ENCODE measurements at regions of chr6 and their contacts with region 1.

Region 1: GRCh38 chr6:31795616-31796298 is at the start of gene VARS1:
- DNase-seq: peak; percentile 86
- H3K4me3 Mint-ChIP-seq: peak within 1 kb of the TSS; percentile 89
- H3K27ac Mint-ChIP-seq: peak within 1 kb of the TSS; percentile 97
- H3K4me1 Mint-ChIP-seq: peaks cover 58% of the 10 kb centered on the region
- H3K27me3 Mint-ChIP-seq: no peaks in the 10 kb centered on the region
- total RNA-seq, gene VARS1: 84.1 to 88.4 TPM

Region 2: DNA sequence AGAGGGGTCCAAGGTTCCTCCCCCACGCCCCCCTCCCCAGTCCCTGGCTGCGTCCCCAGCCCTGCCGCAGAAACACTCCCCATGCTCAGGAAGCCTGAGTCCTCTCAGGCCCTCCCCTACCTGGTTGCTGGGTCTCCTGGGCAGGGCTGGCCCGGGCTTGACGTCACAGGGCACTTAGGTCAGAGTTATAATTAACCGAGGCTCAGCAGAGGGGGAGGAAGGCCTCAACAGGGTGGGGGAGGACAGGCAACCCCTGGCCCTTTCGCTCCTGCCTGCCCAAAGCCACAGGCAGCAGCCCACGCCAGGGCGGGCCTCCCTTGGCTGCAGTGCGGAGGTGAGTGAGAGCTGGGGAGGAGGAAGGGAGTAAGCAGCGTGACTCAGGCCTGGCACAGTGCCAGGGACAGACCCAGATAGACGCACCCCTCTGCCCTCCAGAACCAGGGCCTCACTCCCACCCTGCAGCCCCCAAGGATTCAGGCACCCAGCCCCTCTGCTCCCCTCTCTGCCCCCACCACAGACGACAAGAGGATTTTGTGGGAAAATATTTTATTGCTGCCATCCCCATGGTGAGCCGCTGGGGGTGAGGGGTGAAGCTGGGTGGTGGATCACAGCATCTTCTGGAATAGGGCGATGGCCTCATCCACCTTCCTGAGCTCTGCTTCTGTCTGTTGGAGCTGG is 18.6 kb before region 1 on chr6 and contains the start of gene VWA7:
- CTCF ChIA-PET with region 1: interaction called, 5 read pairs
- POLR2A ChIA-PET with region 1: interaction called, 14 read pairs
- DNase-seq: peak; percentile 83
- H3K4me3 Mint-ChIP-seq: peak within 1 kb of the TSS; percentile 63
- H3K27ac Mint-ChIP-seq: peak within 1 kb of the TSS; percentile 84
- H3K4me1 Mint-ChIP-seq: peaks cover 43% of the 10 kb centered on the region
- H3K27me3 Mint-ChIP-seq: no peaks in the 10 kb centered on the region
- total RNA-seq, gene VWA7: 11.0 to 12.2 TPM

Region 3: DNA sequence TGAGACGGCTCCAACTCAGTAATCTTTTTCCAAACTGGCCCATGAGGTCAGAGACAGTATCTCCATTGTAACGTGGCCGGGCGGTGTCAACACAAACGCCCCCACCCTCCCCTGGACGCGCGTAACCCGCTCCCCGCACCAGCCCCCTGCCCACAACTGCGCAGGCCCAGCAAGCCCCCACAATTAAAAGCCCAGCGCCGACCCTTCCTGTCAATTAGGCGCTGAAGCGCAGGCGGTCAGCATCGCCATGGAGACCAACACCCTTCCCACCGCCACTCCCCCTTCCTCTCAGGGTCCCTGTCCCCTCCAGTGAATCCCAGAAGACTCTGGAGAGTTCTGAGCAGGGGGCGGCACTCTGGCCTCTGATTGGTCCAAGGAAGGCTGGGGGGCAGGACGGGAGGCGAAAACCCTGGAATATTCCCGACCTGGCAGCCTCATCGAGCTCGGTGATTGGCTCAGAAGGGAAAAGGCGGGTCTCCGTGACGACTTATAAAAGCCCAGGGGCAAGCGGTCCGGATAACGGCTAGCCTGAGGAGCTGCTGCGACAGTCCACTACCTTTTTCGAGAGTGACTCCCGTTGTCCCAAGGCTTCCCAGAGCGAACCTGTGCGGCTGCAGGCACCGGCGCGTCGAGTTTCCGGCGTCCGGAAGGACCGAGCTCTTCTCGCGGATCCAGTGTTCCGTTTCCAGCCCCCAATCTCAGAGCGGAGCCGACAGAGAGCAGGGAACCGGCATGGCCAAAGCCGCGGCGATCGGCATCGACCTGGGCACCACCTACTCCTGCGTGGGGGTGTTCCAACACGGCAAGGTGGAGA is 19.5 kb after region 1 on chr6 and contains the starts of genes HSPA1A and HSPA1L:
- CTCF ChIA-PET with region 1: interaction called, 8 read pairs
- POLR2A ChIA-PET with region 1: interaction called, 35 read pairs
- DNase-seq: peak; percentile 82
- H3K4me3 Mint-ChIP-seq: peak within 1 kb of the TSS; percentile 83
- H3K27ac Mint-ChIP-seq: peak within 1 kb of the TSS; percentile 96
- H3K4me1 Mint-ChIP-seq: peaks cover 55% of the 10 kb centered on the region
- H3K27me3 Mint-ChIP-seq: no peaks in the 10 kb centered on the region
- total RNA-seq, gene HSPA1A: 147 to 151 TPM
- total RNA-seq, gene HSPA1L: 2.8 to 3.0 TPM

Region 4: DNA sequence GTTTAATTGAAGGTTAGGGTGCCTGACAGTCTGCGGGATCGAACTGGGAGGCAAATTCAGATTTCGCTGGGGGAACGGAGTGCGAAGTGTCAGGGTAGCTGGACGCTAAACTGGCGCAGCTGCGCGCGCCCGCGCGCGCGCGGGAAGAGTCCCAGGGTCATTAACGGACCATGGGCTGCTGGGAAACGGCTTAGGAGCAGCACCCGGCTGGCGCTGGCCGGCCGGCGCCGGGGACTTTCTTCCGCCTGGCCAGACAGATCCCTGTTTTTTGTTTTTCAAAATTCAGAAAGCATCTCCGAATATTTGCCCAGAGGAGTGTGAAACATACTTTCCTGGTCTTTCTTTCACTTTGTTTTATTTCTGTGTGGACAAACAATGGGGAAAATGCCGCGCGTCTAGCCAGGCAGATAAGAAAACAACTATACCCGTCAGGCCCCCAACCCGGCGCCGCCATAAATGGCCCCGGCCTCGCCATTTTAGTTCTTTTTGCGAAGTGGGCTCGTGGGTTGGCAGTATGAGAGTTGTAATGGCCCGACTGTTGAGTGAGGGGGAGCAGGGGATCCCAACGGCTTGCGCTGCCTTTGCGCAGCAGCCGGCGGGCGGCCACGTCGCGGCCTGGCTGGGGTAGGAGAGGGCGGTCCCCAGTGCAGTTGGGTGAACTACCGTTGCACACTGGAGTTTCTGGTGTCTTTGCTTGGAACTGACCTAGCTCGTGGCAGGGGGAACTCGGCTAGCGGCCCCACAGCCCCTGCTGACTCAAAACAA is 38.9 kb after region 1 on chr6:
- CTCF ChIA-PET with region 1: interaction called, 11 read pairs
- POLR2A ChIA-PET with region 1: interaction called, 10 read pairs
- DNase-seq: peak; percentile 79
- H3K4me3 Mint-ChIP-seq: peak overlapping the region; percentile 81
- H3K27ac Mint-ChIP-seq: peak overlapping the region; percentile 91
- H3K4me1 Mint-ChIP-seq: peaks cover 56% of the 10 kb centered on the region
- H3K27me3 Mint-ChIP-seq: no peaks in the 10 kb centered on the region

Region 5: DNA sequence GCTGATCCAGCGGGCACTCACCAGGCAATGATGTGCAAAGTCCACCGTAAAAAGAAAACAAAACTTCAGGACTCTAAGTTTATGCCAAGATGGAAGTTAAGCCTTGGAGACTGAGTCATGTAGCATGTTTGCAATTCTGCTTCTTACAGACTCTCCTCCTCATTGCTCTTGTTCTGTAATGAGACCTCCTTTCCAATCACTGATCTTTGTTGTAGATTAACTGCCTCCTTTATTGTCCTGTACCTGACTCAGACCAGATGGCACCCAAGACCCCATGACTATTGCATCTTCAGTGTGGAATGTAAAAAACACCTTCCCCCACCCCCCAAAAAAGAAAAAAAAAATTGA is 55.7 kb after region 1 on chr6:
- CTCF ChIA-PET with region 1: no interaction called
- POLR2A ChIA-PET with region 1: no interaction called
- DNase-seq: no peak
- H3K4me3 Mint-ChIP-seq: no peak overlapping the region
- H3K27ac Mint-ChIP-seq: no peak overlapping the region
- H3K4me1 Mint-ChIP-seq: no peaks in the 10 kb centered on the region
- H3K27me3 Mint-ChIP-seq: no peaks in the 10 kb centered on the region

Region 6: GRCh38 chr6:31952140-31952805 is 156.5 kb after region 1 on chr6:
- CTCF ChIA-PET with region 1: no interaction called
- POLR2A ChIA-PET with region 1: no interaction called
- DNase-seq: peak; percentile 41
- H3K4me3 Mint-ChIP-seq: no peak overlapping the region
- H3K27ac Mint-ChIP-seq: no peak overlapping the region
- H3K4me1 Mint-ChIP-seq: peaks cover 2% of the 10 kb centered on the region
- H3K27me3 Mint-ChIP-seq: no peaks in the 10 kb centered on the region

Measured in activated CD4-positive, alpha-beta memory T cell treated with anti-CD3 and anti-CD28 coated beads, Interleukin-2, amount 10 ng/mL, durations not matched to agents 7 days and 5 days (primary cell).